ENCODE measurements at regions of chr18 and their contacts with region 1.

Region 1: GRCh38 chr18:58671111-58671631 is at the start of gene MALT1:
- DNase-seq: peak; percentile 65
- H3K4me3 ChIP-seq: peak within 1 kb of the TSS; percentile 74
- H3K27ac ChIP-seq: peak within 1 kb of the TSS; percentile 77
- H3K27me3 ChIP-seq: no peaks in the 10 kb centered on the region
- CTCF ChIP-seq: no peak
- polyA plus RNA-seq, gene MALT1: 17.4 and 24.3 TPM in 2 replicates

Region 2: DNA sequence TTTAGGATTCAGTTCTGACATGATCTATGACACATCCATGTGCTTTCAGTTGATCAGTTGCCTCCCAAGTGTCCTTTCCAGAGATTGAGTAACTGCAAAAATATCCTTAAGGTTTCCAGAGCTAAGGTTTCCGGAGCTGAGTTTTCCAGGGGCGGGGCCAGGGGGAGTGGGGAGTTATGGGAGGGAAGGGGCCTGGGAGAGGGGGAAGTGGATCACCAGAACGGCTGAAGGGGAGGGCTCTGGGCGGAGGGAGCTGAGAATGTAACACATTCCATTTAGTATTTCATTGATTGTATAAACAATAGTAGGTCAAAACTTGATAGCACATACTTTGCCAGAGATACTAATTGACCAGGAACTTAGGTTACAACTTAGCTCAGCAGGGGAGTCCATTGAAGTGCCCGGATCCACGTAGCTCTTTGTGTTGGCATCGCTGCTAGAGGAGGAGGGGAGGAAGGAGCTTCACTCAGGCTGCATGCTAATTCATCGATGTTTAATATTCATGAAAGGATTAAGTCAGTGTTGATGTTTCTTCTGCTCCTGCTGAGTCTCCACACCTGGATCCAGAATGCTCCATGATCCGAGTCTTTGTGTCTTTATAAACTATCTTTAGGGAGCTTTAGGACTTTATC is 332.1 kb before region 1 on chr18:
- CTCF ChIA-PET with region 1: no interaction called
- POLR2A ChIA-PET with region 1: no interaction called
- DNase-seq: no peak
- H3K4me3 ChIP-seq: no peak overlapping the region
- H3K27ac ChIP-seq: no peak overlapping the region
- H3K27me3 ChIP-seq: no peaks in the 10 kb centered on the region
- CTCF ChIP-seq: no peak

Region 3: DNA sequence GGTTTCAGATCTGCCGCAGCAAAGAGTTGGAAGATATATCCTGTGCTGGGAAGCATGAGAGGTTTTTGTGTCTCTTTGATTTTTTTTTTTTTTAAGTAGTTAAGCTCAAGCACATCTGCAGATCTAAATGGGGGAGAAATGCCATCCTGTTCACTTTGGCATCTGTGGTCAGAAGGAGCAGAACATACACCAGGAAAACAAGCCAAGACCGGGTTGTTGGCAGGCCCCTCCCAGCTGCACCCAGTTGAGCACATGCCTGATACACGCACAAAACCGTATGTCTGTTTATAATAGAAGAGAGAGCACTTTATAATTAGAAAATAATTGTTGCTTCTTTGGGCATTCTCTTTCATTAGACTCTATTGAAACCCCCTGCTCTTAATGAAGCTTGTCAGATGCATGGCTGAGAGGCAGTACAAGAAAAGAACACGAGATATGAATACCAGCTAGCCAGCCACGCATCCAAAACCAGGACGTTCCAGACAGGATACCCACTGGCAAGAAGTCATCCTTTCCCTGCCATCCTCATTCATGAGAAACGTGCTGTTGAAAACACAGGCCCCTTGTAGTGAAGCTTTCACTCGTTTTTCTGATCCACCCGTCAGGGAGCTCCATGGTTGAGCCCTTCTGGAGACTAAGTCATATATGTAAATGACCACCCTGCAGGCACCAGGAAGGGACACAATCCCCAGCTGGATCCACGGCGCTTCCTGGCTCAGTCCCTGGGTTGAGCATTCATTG is 194.5 kb before region 1 on chr18:
- CTCF ChIA-PET with region 1: no interaction called
- POLR2A ChIA-PET with region 1: no interaction called
- DNase-seq: no peak
- H3K4me3 ChIP-seq: no peak overlapping the region
- H3K27ac ChIP-seq: no peak overlapping the region
- H3K27me3 ChIP-seq: no peaks in the 10 kb centered on the region
- CTCF ChIP-seq: no peak

Region 4: DNA sequence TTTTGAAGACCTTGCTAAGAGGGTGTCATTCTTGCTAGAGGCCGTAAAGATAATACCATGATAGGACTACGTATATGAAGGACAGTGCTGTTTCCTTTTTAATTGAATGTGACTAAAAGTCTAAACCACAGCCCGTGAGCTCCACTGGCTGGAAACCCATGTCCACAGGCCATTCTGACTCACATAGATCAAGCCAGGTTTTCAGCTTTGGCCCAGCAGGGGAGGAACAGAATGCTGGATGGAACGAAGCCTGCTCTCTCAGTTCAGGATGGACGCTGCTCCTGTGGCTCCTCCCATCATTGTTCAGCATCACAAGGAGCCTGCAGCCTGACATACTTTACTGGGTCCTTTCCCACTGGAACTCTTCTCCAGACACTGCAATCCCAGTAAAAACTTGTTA is 89.9 kb before region 1 on chr18:
- CTCF ChIA-PET with region 1: interaction called, 3 read pairs
- POLR2A ChIA-PET with region 1: interaction called, 18 read pairs
- DNase-seq: peak; percentile 66
- H3K4me3 ChIP-seq: peak overlapping the region; percentile 14
- H3K27ac ChIP-seq: peak overlapping the region; percentile 99
- H3K27me3 ChIP-seq: no peaks in the 10 kb centered on the region
- CTCF ChIP-seq: peak; percentile 39

Region 5: DNA sequence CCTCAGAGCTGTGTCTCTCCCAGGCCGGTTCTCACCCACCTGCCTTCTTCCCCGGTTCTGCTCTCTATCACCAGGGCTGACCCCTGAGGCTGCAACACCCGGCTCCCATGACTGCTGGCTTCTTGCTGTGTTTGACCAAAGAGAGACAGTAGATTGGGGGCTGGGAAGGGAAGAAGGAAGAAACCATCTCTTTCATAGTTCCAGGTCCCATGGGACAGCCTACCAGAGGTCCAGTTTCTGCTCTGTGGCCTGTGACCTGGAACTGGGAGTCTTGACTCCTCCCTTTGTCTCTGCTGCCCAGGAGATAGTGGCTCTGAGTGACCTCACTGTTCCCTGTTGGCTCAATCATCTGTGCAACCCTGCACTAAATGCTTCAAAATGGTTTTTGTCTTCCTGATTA is 80.3 kb before region 1 on chr18:
- CTCF ChIA-PET with region 1: no interaction called
- POLR2A ChIA-PET with region 1: interaction called, 20 read pairs
- DNase-seq: no peak
- H3K4me3 ChIP-seq: no peak overlapping the region
- H3K27ac ChIP-seq: peak overlapping the region; percentile 62
- H3K27me3 ChIP-seq: no peaks in the 10 kb centered on the region
- CTCF ChIP-seq: no peak

Region 6: DNA sequence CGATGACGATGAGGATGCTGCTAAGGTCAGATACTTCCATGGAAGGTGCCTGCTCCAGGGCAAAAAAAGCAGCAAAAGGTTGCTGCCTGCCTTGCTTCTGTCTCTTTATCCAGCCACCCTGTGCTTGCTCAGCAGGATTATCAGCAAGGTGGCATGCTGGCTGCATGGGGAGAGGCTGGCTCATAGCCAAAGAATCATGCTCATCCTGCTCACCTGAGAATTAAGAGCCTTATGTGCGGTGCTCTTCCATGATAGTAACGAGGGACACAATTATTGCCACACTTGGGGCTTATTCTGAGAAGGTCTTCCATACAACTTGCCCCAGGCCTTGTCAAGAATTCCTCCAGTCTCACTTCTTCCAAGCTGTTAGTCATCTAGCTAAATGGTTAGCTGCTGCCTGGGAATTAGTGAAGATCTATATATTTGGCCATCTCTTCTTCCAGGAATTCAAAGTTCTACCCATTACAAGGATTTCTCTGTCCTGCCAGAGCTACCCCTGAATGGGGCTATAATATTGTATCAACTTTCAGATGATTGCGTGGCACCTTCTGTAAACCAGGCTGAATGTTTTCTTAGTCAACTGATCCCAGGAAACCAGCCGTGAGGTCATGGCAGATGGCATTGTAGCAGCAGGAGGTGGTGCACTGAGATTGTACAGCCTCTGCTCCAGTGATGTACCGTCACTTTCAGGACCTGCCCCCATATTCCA is 408.2 kb after region 1 on chr18:
- CTCF ChIA-PET with region 1: no interaction called
- POLR2A ChIA-PET with region 1: interaction called, 10 read pairs
- DNase-seq: no peak
- H3K4me3 ChIP-seq: no peak overlapping the region
- H3K27ac ChIP-seq: no peak overlapping the region
- H3K27me3 ChIP-seq: peaks cover 46% of the 10 kb centered on the region
- CTCF ChIP-seq: no peak

Region 7: GRCh38 chr18:59516356-59517155 is 845.4 kb after region 1 on chr18:
- CTCF ChIA-PET with region 1: no interaction called
- POLR2A ChIA-PET with region 1: interaction called, 11 read pairs
- DNase-seq: peak; percentile 52
- H3K4me3 ChIP-seq: no peak overlapping the region
- H3K27ac ChIP-seq: no peak overlapping the region
- H3K27me3 ChIP-seq: no peaks in the 10 kb centered on the region
- CTCF ChIP-seq: no peak

Measured in AG04450 (cell line).